ENCODE measurements at regions of chr20 and their contacts with region 1.

Region 1: GRCh38 chr20:38057351-38057972 is 23.9 kb downstream of the RPRD1B start:
- DNase-seq: peak; percentile 83
- H3K4me3 ChIP-seq: no peak overlapping the region
- H3K27ac ChIP-seq: no peak overlapping the region
- H3K4me1 ChIP-seq: peaks cover 13% of the 10 kb centered on the region; the same call in 1 of the 2 replicates
- H3K27me3 ChIP-seq: no peaks in the 10 kb centered on the region

Region 2: GRCh38 chr20:37822141-37822601 is 235.3 kb before region 1 on chr20:
- in situ Hi-C with region 1: no loop called
- DNase-seq: peak; percentile 99
- H3K4me3 ChIP-seq: peak overlapping the region; percentile 61
- H3K27ac ChIP-seq: peak overlapping the region; percentile 98
- H3K4me1 ChIP-seq: peaks cover 29% of the 10 kb centered on the region
- H3K27me3 ChIP-seq: no peaks in the 10 kb centered on the region

Region 3: GRCh38 chr20:38321959-38322598 is 264.6 kb after region 1 on chr20:
- in situ Hi-C with region 1: loop called (anchors 10 kb)
- DNase-seq: peak; percentile 85
- H3K4me3 ChIP-seq: no peak overlapping the region
- H3K27ac ChIP-seq: no peak overlapping the region
- H3K4me1 ChIP-seq: no peaks in the 10 kb centered on the region
- H3K27me3 ChIP-seq: no peaks in the 10 kb centered on the region

Region 4: GRCh38 chr20:38418509-38419204 is 361.2 kb after region 1 on chr20:
- in situ Hi-C with region 1: loop called (anchors 10 kb)
- DNase-seq: peak; percentile 31
- H3K4me3 ChIP-seq: no peak overlapping the region
- H3K27ac ChIP-seq: no peak overlapping the region
- H3K4me1 ChIP-seq: no peaks in the 10 kb centered on the region
- H3K27me3 ChIP-seq: no peaks in the 10 kb centered on the region

Measured in GM23248 (cell line).